Breast epithelium (tissue), 4 donors: ENCODE measurements at regions of chr4 and their contacts with region 1.

Region 1: GRCh38 chr4:2662598-2662997 is 93.5 kb downstream of the TNIP2 start:
- DNase-seq: no peak
- H3K4me3 ChIP-seq: no peak overlapping the region
- H3K27ac ChIP-seq: no peak overlapping the region
- H3K4me1 ChIP-seq: no peaks in the 10 kb centered on the region
- H3K27me3 ChIP-seq: no peaks in the 10 kb centered on the region
- CTCF ChIP-seq: no peak
- POLR2A ChIP-seq: no peak

Region 2: DNA sequence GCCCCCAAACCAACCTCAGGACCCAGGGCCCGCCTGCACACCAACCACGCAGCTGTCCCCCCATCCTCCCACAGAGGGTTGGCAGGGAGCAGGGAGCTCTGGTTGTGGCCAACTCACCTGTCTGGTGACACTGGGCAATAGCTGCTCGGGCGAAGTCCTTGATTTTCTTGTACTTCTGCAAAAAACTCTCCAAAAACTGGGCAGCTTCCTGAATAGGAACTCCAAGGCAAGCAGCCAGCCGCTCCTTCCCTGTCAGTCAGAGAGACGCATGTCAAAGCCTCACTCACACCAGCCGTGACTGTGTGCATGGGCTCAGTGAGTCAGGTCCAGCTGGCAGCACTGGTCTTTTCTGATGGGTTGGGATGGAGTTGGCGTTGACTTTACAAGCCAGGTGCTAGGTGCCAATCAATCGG is 577.1 kb before region 1 on chr4:
- intact Hi-C with region 1: no loop called
- DNase-seq: peak in 1 of 2 donors; percentile 28
- H3K4me3 ChIP-seq: no peak overlapping the region
- H3K27ac ChIP-seq: no peak overlapping the region
- H3K4me1 ChIP-seq: no peaks in the 10 kb centered on the region
- H3K27me3 ChIP-seq: no peaks in the 10 kb centered on the region
- CTCF ChIP-seq: no peak
- POLR2A ChIP-seq: no peak

Region 3: DNA sequence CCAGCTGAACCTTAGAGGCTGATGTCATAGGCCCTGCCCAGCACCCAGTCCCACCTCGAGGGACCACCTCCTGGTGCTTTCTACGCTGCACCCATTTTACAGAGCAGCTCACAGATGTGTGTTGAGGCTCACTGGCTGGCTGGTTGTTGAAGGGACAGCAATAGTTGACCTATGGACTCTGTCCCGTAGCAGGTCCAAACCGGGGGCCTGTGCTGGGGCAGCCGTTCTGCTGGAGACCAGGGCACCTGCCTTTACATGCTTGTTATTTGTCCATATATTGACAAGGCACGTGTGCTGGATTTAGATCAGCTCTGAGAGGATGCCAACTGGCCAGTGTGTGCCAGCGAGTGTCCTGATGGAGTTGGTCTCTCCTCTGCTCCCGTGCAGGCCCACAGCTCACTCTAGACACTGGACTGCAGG is 35.4 kb after region 1 on chr4:
- intact Hi-C with region 1: loop called (anchors 2 kb)
- DNase-seq: no peak
- H3K4me3 ChIP-seq: no peak overlapping the region
- H3K27ac ChIP-seq: no peak overlapping the region
- H3K4me1 ChIP-seq: no peaks in the 10 kb centered on the region
- H3K27me3 ChIP-seq: no peaks in the 10 kb centered on the region
- CTCF ChIP-seq: no peak
- POLR2A ChIP-seq: no peak